Dorsolateral prefrontal cortex (tissue), 120 donors: ENCODE measurements at regions of chr10 and their contacts with region 1.

Region 1: GRCh38 chr10:78342827-78343653 is 309.4 kb downstream of the RPS24 start:
- DNase-seq: peak in 4 of 10 donors; percentile 2 to 24 (median 12)
- H3K4me3 ChIP-seq: no peak overlapping the region
- H3K27ac ChIP-seq: no peak overlapping the region
- H3K27me3 ChIP-seq: no peaks in the 10 kb centered on the region
- CTCF ChIP-seq: no peak

Region 2: GRCh38 chr10:78389419-78389818 is 46.4 kb after region 1 on chr10:
- intact Hi-C with region 1: loop called in 1 of 2 experiments (anchors 5 kb)
- DNase-seq: no peak
- H3K4me3 ChIP-seq: no peak overlapping the region
- H3K27ac ChIP-seq: no peak overlapping the region
- H3K27me3 ChIP-seq: no peaks in the 10 kb centered on the region
- CTCF ChIP-seq: no peak

Region 3: GRCh38 chr10:78664929-78665553 is 322.0 kb after region 1 on chr10:
- intact Hi-C with region 1: no loop called
- DNase-seq: no peak
- H3K4me3 ChIP-seq: no peak overlapping the region
- H3K27ac ChIP-seq: no peak overlapping the region
- H3K27me3 ChIP-seq: peaks cover 0 to 3% (median 0%) of the 10 kb centered on the region in 45 donors
- CTCF ChIP-seq: peak in 39 of 56 donors; percentile 9 to 70 (median 29)